Body of pancreas (tissue), 4 donors: ENCODE measurements at regions of chr1 and their contacts with region 1.

Region 1: GRCh38 chr1:181192316-181192715 is 103.8 kb downstream of the IER5 start:
- DNase-seq: no peak
- ATAC-seq: no peak
- H3K4me3 ChIP-seq: no peak overlapping the region
- H3K27ac ChIP-seq: no peak overlapping the region
- H3K4me1 ChIP-seq: peaks cover 12% of the 10 kb centered on the region
- H3K27me3 ChIP-seq: peaks cover 0 to 4% of the 10 kb centered on the region in 2 donors
- CTCF ChIP-seq: no peak
- POLR2A ChIP-seq: no peak

Region 2: DNA sequence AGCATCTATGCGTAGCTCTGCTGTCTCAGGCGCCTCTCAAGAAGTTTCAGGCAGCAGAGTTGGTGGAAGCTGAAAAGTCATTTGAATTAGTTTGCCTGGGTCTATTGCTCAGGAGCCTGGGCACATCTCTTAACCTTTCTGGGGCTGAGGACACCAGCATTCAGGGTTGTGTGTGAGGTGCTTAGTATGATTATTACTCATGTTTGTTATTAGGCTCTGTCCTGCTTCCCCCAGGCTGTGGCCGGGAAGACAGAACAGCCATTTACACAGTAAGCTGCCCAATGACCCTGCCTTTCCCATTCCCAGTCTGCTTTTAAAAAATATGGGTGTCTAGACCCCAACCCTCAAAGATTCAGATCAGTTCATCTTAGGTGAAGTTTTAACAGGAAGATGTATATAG is 237.1 kb after region 1 on chr1:
- intact Hi-C with region 1: loop called (anchors 2 kb)
- DNase-seq: no peak
- ATAC-seq: no peak
- H3K4me3 ChIP-seq: no peak overlapping the region
- H3K27ac ChIP-seq: no peak overlapping the region
- H3K4me1 ChIP-seq: no peaks in the 10 kb centered on the region
- H3K27me3 ChIP-seq: no peaks in the 10 kb centered on the region
- CTCF ChIP-seq: no peak
- POLR2A ChIP-seq: no peak